Activated CD4-positive, alpha-beta memory T cell treated with anti-CD3 and anti-CD28 coated beads for 36 hours (primary cell): ENCODE measurements at regions of chr13 and their contacts with region 1.

Region 1: GRCh38 chr13:99051768-99052455 is 74.0 kb upstream of the DOCK9 start:
- DNase-seq: no peak
- H3K4me3 Mint-ChIP-seq: peak overlapping the region; percentile 31
- H3K27ac Mint-ChIP-seq: peak overlapping the region; percentile 76
- H3K4me1 Mint-ChIP-seq: peaks cover 83% of the 10 kb centered on the region
- H3K27me3 Mint-ChIP-seq: no peaks in the 10 kb centered on the region

Region 2: GRCh38 chr13:99033814-99034213 is 18.1 kb before region 1 on chr13:
- CTCF ChIA-PET with region 1: interaction called, 27 read pairs
- POLR2A ChIA-PET with region 1: interaction called, 5 read pairs
- intact Hi-C with region 1: no loop called
- DNase-seq: no peak
- H3K4me3 Mint-ChIP-seq: no peak overlapping the region
- H3K27ac Mint-ChIP-seq: no peak overlapping the region
- H3K4me1 Mint-ChIP-seq: peaks cover 57% of the 10 kb centered on the region
- H3K27me3 Mint-ChIP-seq: no peaks in the 10 kb centered on the region

Region 3: GRCh38 chr13:99075268-99076191 is 23.6 kb after region 1 on chr13:
- CTCF ChIA-PET with region 1: interaction called, 3 read pairs
- POLR2A ChIA-PET with region 1: interaction called, 3 read pairs
- intact Hi-C with region 1: loop called (anchors 1 kb)
- DNase-seq: no peak
- H3K4me3 Mint-ChIP-seq: peak overlapping the region; percentile 47
- H3K27ac Mint-ChIP-seq: peak overlapping the region; percentile 87
- H3K4me1 Mint-ChIP-seq: peaks cover 70% of the 10 kb centered on the region
- H3K27me3 Mint-ChIP-seq: no peaks in the 10 kb centered on the region

Region 4: DNA sequence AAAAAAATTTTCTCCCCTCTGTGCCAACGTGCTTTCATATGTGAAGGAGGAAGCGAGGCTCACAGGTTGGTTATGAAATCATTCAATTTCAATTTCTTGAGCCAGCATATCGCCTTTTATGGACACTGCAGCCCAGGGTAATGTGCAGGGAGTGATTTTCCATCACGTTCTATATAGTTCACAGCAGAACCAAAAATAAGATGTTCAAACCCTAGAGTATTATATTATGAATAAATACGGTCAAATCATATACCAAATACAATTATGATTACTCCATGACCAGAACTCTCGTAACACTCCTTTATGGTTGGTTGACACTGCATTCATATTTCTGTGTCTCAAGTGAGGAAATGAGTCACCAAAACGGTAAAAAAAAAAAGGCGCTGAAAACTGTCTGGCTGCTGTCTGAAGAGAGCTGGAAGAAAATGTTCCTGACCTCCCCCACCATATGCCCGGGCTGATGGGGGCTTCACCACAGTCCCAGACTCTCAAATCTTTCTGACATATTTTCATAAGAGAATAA is 72.9 kb after region 1 on chr13:
- CTCF ChIA-PET with region 1: no interaction called
- POLR2A ChIA-PET with region 1: interaction called, 3 read pairs
- intact Hi-C with region 1: loop called (anchors 2 kb)
- DNase-seq: peak; percentile 38
- H3K4me3 Mint-ChIP-seq: peak overlapping the region; percentile 58
- H3K27ac Mint-ChIP-seq: peak overlapping the region; percentile 71
- H3K4me1 Mint-ChIP-seq: peaks cover 45% of the 10 kb centered on the region
- H3K27me3 Mint-ChIP-seq: peaks cover 2% of the 10 kb centered on the region

Region 5: GRCh38 chr13:99721606-99722337 is 669.9 kb after region 1 on chr13:
- CTCF ChIA-PET with region 1: no interaction called
- POLR2A ChIA-PET with region 1: no interaction called
- intact Hi-C with region 1: no loop called
- DNase-seq: no peak
- H3K4me3 Mint-ChIP-seq: no peak overlapping the region
- H3K27ac Mint-ChIP-seq: no peak overlapping the region
- H3K4me1 Mint-ChIP-seq: no peaks in the 10 kb centered on the region
- H3K27me3 Mint-ChIP-seq: no peaks in the 10 kb centered on the region